ENCODE measurements at regions of chr12 and their contacts with region 1.

Region 1: GRCh38 chr12:25557830-25558436 is 4.8 kb upstream of the LMNTD1 start:
- DNase-seq: peak in 3 of 9 donors; percentile 8 to 12 (median 9)
- ATAC-seq: no peak
- H3K4me3 ChIP-seq: no peak overlapping the region
- H3K4me3 Mint-ChIP-seq: no peak overlapping the region
- H3K27ac ChIP-seq: no peak overlapping the region
- H3K27ac Mint-ChIP-seq: no peak overlapping the region
- H3K4me1 ChIP-seq: no peaks in the 10 kb centered on the region
- H3K4me1 Mint-ChIP-seq: peaks cover 0 to 16% (median 8%) of the 10 kb centered on the region in 7 donors
- H3K27me3 ChIP-seq: no peaks in the 10 kb centered on the region
- H3K27me3 Mint-ChIP-seq: peaks cover 0 to 16% (median 0%) of the 10 kb centered on the region in 5 donors

Region 2: GRCh38 chr12:25573346-25573745 is 15.4 kb after region 1 on chr12:
- CTCF ChIA-PET with region 1: no interaction called
- POLR2A ChIA-PET with region 1: no interaction called
- intact Hi-C with region 1: no loop called
- DNase-seq: no peak
- ATAC-seq: no peak
- H3K4me3 ChIP-seq: no peak overlapping the region
- H3K4me3 Mint-ChIP-seq: no peak overlapping the region
- H3K27ac ChIP-seq: no peak overlapping the region
- H3K27ac Mint-ChIP-seq: no peak overlapping the region
- H3K4me1 ChIP-seq: no peaks in the 10 kb centered on the region
- H3K4me1 Mint-ChIP-seq: peaks cover 0 to 2% (median 0%) of the 10 kb centered on the region in 7 donors
- H3K27me3 ChIP-seq: no peaks in the 10 kb centered on the region
- H3K27me3 Mint-ChIP-seq: peaks cover 0 to 5% (median 0%) of the 10 kb centered on the region in 5 donors

Region 3: DNA sequence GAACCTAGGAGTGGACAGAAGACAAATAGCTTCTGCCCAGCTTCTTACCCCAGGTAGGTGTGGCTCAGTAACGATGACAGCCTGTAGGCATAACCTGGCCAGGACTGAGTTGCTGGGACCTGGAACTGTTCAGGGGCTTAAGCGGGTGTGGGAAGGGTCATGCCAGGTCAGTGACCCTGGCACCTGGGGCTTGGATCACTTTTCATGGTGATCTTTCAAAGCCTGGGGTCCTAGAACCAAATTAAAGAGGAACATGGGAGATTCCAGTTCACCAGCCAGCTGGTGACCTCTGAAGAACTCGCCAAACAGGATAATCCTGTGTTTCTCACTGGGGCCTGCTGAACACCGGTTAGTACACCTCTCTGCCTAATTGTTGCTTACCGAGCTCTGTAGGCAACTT is 97.8 kb after region 1 on chr12:
- CTCF ChIA-PET with region 1: interaction called, 11 read pairs
- POLR2A ChIA-PET with region 1: no interaction called
- intact Hi-C with region 1: no loop called
- DNase-seq: no peak
- ATAC-seq: no peak
- H3K4me3 ChIP-seq: no peak overlapping the region
- H3K4me3 Mint-ChIP-seq: no peak overlapping the region
- H3K27ac ChIP-seq: no peak overlapping the region
- H3K27ac Mint-ChIP-seq: no peak overlapping the region
- H3K4me1 ChIP-seq: no peaks in the 10 kb centered on the region
- H3K4me1 Mint-ChIP-seq: peaks cover 0 to 11% (median 8%) of the 10 kb centered on the region in 7 donors
- H3K27me3 ChIP-seq: no peaks in the 10 kb centered on the region
- H3K27me3 Mint-ChIP-seq: peaks cover 0 to 5% (median 0%) of the 10 kb centered on the region in 5 donors

Measured in naive thymus-derived CD4-positive, alpha-beta T cell (primary cell).